ENCODE measurements at regions of chr11 and their contacts with region 1.

Region 1: DNA sequence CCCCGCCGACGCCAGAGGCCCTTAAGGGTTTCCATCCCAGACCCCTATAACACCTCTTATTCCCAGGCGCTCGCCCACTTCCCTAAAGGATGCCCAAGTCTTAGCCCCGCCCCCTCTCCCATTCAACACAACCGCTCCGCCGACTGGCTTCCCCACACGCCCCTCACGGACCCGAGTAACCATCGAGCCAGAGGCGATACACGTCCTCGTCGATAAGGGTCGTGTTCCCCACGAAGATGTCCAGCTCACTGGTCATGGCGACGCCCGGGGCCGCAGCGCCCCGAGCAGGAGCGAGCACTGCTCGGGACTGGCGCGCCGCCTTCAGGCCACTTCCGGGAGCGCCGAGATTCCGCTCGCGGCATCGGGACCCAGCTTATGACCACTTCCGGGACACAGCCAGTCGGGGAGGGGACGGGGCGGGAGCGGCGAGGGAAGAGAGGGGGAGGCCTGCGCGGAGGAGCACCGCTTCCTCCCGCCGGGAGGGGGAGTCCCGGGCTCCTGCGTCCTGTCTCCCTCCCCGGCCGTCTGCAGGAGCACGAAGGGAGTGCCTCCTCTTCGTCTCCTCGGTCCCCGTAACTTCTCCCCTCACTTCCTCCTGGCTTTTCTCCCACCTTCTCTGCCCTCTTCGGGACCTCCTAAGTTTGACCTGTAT is at the start of gene FIBP:
- DNase-seq: peak; percentile 99
- total RNA-seq, gene FIBP: 62.6 TPM

Region 2: DNA sequence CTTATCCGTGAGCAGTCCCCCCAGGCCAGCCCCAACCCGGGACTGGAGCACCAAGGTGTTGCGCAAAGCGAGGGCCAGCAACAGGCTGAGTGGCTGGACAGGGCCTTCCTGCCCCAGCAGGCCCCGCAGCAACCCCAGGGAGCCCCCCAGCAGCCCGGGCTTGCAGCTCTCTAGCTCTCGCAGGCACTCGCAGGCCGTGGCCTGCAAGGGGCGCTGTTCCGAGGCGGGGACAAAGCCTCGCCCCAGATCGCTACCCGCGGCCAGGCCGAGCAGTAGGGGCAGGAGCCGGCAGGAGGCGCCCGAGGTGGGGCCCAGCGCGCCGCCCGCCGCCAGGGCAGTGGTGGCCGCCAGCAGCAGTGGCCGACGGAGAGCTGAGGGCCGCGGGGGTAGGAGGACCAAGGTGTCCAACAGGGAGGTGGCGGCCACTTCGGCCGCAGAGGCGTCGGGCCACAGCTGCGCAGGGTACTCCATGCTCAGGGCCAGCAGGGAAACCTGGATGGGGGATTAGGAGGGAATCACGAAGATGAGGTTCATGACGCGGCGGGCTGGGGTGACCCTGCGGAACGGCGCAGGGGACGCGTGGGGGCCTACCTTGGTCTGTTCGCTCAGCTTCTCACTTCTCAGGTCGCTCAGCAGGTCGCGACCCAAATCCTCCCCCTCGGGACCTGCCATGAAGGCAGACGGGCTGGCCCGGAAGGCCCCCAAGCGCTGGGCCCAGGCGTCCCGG is 108.3 kb before region 1 on chr11:
- intact Hi-C with region 1: no loop called
- DNase-seq: peak; percentile 92

Region 3: DNA sequence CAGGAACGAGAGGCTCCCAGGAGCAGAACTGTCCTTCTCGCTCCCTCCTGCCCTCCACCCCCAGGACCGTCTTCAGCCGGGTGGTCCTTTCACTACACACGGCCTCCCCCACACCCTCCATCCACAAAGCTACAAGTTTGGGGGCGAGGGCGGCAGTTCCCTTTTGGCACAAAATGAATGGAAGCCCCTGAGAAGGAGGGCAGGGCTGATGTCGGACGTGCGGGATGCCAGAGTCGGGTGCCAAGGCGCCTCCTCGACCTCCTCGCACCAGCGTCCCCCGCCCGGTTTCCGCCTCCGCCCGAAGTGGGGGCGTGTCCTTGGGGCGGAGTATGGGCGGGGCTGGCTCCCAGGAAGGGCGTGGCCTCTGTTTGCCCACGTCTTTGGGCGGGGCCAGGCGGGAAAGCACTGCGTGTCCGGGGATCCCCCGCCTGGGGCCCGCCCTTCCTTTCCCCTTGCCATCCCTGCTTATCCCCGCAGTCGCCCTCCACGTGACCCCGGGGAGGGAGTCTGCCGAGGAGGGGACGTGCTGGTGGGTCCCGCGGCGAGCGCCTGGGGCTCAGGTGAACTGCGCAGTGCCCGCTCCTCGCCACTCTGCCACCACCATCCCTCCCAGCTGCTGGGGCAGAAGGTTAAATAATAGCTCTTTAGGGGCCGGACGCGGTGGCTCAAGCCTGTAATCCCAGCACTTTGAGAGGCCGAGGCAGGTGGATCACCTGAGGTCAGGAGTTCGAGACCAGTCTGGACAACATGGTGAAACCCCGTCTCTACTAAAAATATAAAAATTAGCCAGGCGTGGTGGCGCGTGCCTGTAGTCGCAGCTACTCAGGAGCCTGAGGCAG is 14.8 kb before region 1 on chr11:
- intact Hi-C with region 1: loop called (anchors 2 kb)
- DNase-seq: peak; percentile 99

Region 4: DNA sequence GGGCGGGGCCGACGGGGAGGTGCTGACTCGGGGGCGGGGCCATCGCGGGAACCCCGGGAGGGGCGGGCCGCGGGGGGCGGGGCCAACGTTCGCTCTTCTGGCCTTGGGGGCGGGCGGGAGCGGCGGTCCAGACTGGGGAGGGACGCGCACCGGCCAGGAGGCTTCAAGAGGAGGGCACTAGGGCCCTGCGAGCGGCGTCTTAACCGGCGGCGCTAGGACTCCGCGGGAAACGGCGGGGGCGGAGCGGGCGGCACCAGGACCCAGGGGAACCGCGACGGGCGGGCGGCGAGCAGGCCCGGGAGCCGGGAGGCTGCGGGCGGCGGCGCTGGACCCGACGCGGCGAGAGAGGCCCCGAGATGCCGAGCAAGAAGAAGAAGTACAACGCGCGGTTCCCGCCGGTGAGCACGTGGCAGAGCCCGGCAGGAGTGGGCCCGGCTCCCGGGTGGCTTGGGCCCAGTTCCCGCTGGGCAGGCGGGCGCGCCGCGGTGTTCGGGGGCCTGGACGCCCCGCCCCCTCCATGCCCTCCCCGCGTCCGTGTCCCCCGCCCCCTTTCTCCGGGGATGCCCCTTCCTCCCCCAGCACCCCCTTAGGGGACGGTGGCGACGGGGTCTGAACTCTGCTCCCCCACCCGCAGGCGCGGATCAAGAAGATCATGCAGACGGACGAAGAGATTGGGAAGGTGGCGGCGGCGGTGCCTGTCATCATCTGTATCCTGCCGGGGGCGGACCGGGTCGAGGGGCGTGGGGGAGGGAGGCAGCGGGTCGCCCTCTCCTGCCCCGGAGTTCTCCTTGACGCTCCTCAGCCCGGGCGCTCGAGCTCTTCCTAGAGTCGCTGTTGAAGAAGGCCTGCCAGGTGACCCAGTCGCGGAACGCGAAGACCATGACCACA is 31.1 kb after region 1 on chr11 and contains the start of gene DRAP1:
- intact Hi-C with region 1: loop called (anchors 1 kb)
- DNase-seq: peak; percentile 100
- total RNA-seq, gene DRAP1: 113 TPM

Region 5: DNA sequence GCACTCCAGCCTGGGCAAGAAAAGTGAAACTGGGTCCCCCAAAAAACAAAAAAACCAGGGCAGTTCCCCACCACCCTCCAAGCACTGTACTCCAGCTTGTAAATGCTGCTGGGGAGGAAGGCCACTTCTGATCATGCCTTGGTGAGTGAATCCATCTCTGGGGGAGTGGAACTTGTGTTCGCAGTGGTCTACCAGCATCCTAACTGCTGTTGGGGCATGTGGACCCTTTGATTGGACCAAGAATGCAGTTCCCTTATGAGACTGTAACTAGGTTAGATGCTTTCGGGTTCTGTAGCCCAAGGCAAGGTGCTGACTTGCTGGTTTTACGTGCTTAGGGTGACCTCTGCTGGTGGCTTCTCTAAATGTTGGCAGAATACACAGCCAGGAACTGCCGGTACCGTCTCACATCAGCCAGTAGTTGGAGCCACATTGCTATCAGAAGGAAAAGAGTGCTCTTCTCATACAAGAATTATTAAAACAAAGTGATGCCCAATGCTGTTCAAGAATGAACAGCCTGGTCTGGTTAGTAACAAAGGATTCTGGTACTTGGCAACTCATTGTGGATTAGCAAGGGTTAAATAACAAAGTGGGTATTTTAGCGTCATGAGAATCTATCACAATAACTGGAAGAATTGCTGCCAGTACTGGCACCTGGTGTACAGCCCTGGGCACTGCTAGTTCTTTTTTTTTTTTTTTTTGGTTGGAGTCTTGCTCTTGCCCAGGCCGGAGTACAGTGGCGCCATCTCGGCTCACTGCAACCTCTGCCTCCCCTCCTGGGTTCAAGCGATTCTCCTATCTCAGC is 100.7 kb after region 1 on chr11:
- intact Hi-C with region 1: loop called (anchors 2 kb)
- DNase-seq: peak; percentile 89